ENCODE measurements at regions of chr2 and their contacts with region 1.

Region 1: DNA sequence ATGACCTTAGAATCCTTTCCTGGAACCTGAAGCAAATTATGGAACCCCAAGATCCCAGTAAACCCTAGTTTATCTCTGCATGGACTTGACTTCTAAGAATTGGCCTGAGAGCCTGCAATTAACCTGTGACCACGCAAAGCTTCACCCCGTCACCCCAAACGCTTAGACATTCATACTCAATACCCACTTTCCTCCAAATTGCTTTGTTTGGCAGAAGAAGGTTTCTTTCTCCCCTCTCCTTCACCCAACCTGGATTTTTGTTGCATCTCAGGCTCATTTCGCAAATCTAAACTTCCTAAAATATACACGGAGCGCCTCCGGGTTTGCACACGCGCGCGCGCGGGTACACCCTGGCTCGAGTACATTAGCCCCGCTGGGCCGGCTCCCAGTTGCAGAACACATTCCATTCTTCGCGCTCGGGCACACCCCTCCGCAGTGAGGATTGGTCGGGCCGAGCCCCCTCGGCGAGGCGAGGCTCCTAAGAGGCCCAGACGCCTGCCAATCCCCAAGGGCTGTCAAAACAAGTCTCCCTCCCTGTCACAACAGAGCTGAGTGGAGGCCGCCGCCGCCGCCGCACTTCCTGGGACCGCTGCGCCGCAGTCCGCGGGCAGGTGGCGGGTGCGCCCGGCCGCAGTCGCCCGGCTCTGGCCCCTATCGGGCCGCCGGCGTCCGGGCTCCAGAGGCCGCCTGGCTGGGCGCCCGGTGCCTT is at the start of gene PLCL1:
- DNase-seq: peak; percentile 96
- ATAC-seq: peak; percentile 91
- total RNA-seq, gene PLCL1: 93.3 TPM

Region 2: DNA sequence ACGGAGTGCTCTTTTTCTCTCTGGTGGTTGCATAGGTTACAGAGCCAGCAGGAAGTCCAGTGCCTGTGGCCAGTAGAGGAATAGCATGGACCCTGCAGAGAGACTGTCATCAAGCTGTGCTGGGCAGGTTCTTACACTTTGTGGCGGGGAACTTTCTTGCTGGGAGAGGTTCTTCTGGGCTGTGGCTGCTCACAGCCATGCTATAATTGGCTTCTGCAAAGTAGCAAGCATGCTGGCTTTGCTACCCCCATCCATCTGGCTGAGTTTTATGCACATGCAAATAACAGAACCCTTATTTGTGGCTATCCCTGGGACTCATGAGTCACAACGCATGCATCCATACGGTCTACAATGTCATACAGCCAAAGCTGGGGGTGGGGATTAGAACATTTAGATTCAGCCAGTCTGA is 69.1 kb after region 1 on chr2:
- intact Hi-C with region 1: loop called (anchors 10 kb)
- DNase-seq: no peak
- ATAC-seq: peak; percentile 16

Region 3: DNA sequence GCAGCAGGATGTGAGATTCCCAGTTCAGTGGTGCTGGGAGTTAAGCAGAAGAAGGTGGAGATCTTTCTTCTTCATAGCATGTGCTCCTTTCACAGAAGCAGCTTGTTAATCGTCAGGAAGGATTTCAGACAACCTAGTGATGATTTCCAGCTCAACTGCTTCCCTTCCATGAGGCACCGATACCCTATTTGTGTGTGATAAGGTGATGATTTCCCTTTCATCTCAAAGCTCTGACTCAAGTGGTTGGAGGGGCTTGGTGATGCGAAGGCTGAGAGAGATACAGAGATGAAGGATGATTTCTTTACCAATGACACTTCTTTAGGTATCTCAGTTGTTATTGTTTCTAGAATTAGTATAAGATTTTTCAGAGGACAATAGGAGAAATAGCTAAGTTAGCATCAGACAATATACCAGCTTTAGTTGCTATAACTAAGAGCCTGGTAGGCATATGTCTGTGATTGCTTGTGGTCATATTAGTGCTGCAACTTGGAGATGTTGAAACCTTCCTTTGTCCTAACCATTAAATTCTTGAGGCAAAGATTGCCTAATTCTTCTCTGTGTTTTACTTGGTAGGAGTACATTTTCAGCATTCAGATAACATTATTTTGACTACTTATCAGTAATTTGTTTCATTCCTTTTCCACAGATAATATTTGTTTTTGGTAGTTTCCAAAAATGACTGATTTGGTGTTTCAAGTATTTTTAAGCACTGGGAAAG is 111.5 kb after region 1 on chr2:
- intact Hi-C with region 1: no loop called
- DNase-seq: no peak
- ATAC-seq: peak; percentile 50

Region 4: GRCh38 chr2:197958592-197959150 is 154.5 kb after region 1 on chr2:
- intact Hi-C with region 1: loop called (anchors 5 kb)
- DNase-seq: no peak
- ATAC-seq: peak; percentile 94

Region 5: GRCh38 chr2:198296665-198297308 is 492.6 kb after region 1 on chr2:
- intact Hi-C with region 1: loop called (anchors 5 kb)
- DNase-seq: no peak
- ATAC-seq: peak; percentile 89

Measured in Right ventricle myocardium superior (tissue), 1 donor.